ENCODE measurements at regions of chrX and their contacts with region 1.

Region 1: GRCh38 chrX:74133156-74133796 is 170.7 kb upstream of the ZCCHC13 start:
- DNase-seq: peak; percentile 73
- H3K4me3 ChIP-seq: no peak overlapping the region
- H3K27ac ChIP-seq: no peak overlapping the region
- H3K4me1 ChIP-seq: no peaks in the 10 kb centered on the region
- H3K27me3 ChIP-seq: no peaks in the 10 kb centered on the region
- CTCF ChIP-seq: peak; percentile 77

Region 2: DNA sequence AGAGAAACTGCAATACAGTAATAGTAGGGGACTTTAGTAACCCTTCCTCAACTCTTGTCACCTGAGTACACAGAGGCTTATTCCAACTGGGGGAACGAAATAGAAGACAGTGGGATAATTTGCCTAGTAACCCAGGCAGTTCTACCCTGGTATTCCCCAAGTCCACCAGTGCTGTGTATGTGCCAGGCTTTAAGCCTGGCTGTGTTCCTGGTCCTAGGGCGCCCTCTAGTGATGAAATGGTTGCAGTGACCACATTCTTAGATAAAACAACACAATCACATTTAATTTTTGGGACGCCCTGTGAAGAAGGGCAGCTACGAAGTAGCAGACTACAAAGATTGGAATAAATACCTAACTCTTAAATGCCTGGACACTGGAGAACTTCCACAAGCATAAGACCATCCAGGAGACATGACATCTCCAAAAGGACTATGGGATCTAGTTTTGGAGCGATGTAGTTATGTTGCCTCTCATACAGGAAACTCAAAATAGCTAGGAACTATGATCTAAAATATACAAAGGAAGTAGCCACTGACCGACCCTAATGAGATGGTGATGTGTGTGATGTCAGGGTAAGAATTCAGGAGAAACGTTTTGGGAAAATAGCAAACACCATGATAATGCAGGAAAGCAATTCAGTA is 117.8 kb before region 1 on chrX:
- CTCF ChIA-PET with region 1: no interaction called
- POLR2A ChIA-PET with region 1: no interaction called
- intact Hi-C with region 1: loop called (anchors 2 kb)
- DNase-seq: peak; percentile 85
- H3K4me3 ChIP-seq: no peak overlapping the region
- H3K27ac ChIP-seq: no peak overlapping the region
- H3K4me1 ChIP-seq: no peaks in the 10 kb centered on the region
- H3K27me3 ChIP-seq: no peaks in the 10 kb centered on the region
- CTCF ChIP-seq: peak; percentile 94

Region 3: GRCh38 chrX:74286950-74287740 is 153.9 kb after region 1 on chrX:
- CTCF ChIA-PET with region 1: no interaction called
- POLR2A ChIA-PET with region 1: no interaction called
- intact Hi-C with region 1: no loop called
- DNase-seq: no peak
- H3K4me3 ChIP-seq: no peak overlapping the region
- H3K27ac ChIP-seq: no peak overlapping the region
- H3K4me1 ChIP-seq: peaks cover 5% of the 10 kb centered on the region
- H3K27me3 ChIP-seq: no peaks in the 10 kb centered on the region
- CTCF ChIP-seq: no peak

Region 4: GRCh38 chrX:74343343-74344279 is 210.3 kb after region 1 on chrX:
- CTCF ChIA-PET with region 1: no interaction called
- POLR2A ChIA-PET with region 1: no interaction called
- intact Hi-C with region 1: loop called (anchors 5 kb)
- DNase-seq: peak; percentile 94
- H3K4me3 ChIP-seq: no peak overlapping the region
- H3K27ac ChIP-seq: no peak overlapping the region
- H3K4me1 ChIP-seq: peaks cover 4% of the 10 kb centered on the region
- H3K27me3 ChIP-seq: no peaks in the 10 kb centered on the region
- CTCF ChIP-seq: peak; percentile 73